B cell (primary cell): ENCODE measurements at regions of chr13 and their contacts with region 1.

Region 1: DNA sequence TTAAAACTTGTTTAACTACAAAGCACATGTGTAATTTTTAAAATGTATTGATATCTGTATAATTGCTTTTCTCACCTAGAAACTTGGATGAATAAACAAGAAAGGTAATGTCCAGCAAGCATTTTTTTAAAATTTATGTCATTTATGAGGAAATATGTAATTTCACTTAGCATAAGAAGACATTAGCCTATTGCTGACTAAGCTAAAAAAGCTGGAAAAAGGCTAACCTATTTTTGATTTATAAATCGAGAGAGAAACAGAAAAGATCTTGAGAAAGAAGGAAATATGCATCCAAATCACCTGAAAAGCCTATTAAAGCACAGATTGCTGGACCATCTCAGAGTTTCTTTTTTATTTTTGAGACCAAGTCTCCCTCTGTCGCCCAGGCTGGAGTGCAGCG is 1181.3 kb downstream of the SLITRK1 start:
- DNase-seq: no peak
- ATAC-seq: no peak
- H3K4me3 ChIP-seq: no peak overlapping the region
- H3K4me3 Mint-ChIP-seq: no peak overlapping the region
- H3K27ac ChIP-seq: no peak overlapping the region
- H3K27ac Mint-ChIP-seq: no peak overlapping the region
- H3K4me1 ChIP-seq: no peaks in the 10 kb centered on the region
- H3K4me1 Mint-ChIP-seq: no peaks in the 10 kb centered on the region
- H3K27me3 ChIP-seq: no peaks in the 10 kb centered on the region
- H3K27me3 Mint-ChIP-seq: no peaks in the 10 kb centered on the region
- CTCF ChIP-seq: no peak

Region 2: DNA sequence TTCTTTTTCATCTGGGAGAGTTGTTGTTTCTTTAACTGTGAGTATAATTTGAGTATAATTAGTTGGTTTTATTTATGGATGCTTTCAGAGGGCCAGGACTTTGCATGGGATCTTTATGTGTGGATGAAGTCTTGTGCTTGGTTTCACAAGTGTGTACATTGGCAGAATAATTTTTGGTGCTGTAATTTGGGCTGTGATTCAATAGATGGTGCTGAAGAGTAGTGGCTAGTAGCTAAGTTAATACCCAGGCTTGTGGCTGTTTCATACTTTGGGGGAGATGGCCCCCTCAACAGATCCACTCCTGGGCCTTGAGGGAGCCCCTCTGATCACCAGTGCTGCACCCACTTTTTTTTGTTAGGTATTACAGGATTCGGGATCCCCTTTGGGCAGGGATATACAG is 38.9 kb after region 1 on chr13:
- CTCF ChIA-PET with region 1: no interaction called
- POLR2A ChIA-PET with region 1: no interaction called
- intact Hi-C with region 1: loop called (anchors 1 kb)
- DNase-seq: no peak
- ATAC-seq: no peak
- H3K4me3 ChIP-seq: no peak overlapping the region
- H3K4me3 Mint-ChIP-seq: no peak overlapping the region
- H3K27ac ChIP-seq: no peak overlapping the region
- H3K27ac Mint-ChIP-seq: no peak overlapping the region
- H3K4me1 ChIP-seq: no peaks in the 10 kb centered on the region
- H3K4me1 Mint-ChIP-seq: no peaks in the 10 kb centered on the region
- H3K27me3 ChIP-seq: no peaks in the 10 kb centered on the region
- H3K27me3 Mint-ChIP-seq: no peaks in the 10 kb centered on the region
- CTCF ChIP-seq: no peak

Region 3: DNA sequence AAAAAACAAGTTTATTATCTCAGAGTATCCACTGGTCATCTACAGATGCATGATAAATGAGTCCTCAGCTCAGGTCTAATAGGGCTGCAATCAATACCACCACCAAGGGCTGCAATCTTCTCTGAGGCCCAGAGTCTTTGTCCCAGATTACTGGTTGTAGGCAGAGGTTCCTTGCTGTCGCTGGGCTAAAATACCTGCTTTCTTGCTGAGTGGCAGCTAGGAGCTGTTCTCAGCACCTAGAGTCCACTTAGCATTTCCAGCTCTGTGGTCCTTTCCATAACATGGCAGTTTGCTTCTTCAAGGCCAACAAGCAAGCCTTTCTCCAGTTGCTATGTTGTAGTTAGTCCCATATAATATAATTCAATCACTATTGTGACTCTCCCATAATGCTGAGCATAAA is 830.0 kb after region 1 on chr13:
- CTCF ChIA-PET with region 1: no interaction called
- POLR2A ChIA-PET with region 1: no interaction called
- intact Hi-C with region 1: no loop called
- DNase-seq: no peak
- ATAC-seq: no peak
- H3K4me3 ChIP-seq: no peak overlapping the region
- H3K4me3 Mint-ChIP-seq: no peak overlapping the region
- H3K27ac ChIP-seq: no peak overlapping the region
- H3K27ac Mint-ChIP-seq: no peak overlapping the region
- H3K4me1 ChIP-seq: no peaks in the 10 kb centered on the region
- H3K4me1 Mint-ChIP-seq: no peaks in the 10 kb centered on the region
- H3K27me3 ChIP-seq: no peaks in the 10 kb centered on the region
- H3K27me3 Mint-ChIP-seq: no peaks in the 10 kb centered on the region
- CTCF ChIP-seq: no peak